GM13976 (cell line): ENCODE measurements at regions of chr1 and their contacts with region 1.

Region 1: DNA sequence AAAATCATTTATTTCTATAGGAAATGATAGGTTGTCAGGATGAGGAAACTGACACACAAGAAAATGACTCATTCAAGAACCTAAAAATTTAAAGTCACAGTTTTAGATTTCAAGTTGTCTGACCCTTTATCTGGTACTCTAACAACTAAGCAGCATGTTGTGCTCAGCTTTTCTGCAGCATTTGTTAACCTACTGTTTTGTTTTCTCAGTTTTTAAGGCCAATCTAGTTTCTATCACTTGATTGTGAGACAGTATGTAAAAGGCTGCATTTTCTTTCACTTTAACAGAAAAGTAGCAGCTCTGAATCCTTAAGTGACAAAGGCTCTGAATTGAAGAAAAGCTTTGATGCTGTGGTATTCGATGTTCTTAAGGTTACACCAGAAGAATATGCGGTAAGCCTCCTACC is 59.1 kb downstream of the RALGPS2 start:
- DNase-seq: no peak
- CTCF ChIP-seq: no peak

Region 2: GRCh38 chr1:179380299-179380698 is 596.2 kb after region 1 on chr1:
- in situ Hi-C with region 1: loop called (anchors 25 kb)
- DNase-seq: no peak
- CTCF ChIP-seq: no peak